MCF 10A (cell line): ENCODE measurements at regions of chr10 and their contacts with region 1.

Region 1: DNA sequence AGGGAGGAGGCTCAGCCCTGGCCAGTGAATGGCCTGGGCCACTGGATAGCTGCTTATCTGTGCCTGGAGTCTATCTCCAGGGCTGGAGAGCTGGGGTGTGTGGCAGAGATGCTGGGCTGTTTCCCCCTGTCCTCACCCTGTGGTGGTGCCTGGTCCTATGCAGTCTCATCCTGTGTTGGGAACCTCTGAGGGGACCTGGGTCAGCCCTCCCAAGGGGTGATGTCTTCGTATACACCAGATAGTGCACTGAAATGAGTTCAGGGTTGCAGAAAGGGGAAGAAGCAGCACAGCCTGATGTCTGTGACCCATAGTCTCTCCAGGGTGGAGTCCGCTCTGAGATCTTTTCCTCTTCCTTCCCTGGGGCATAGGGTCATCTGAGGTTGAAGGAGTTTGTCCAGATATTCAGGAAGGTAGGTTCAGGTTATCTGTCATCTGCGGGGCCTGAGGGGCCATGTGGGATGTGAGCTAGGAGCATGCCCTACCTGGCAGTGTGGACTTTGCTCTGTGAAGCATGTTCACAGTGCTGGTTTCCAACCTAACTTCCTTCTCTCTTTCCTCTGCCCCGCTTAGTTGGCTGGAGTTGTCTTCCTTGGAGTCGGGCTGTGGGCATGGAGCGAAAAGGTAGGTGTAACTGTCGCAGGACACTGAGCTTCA is 33.4 kb upstream of the SH2D4B start:
- DNase-seq: no peak
- H3K4me3 Mint-ChIP-seq: no peak overlapping the region
- H3K27ac Mint-ChIP-seq: peak overlapping the region; percentile 86
- H3K4me1 Mint-ChIP-seq: peaks cover 68% of the 10 kb centered on the region
- H3K27me3 Mint-ChIP-seq: no peaks in the 10 kb centered on the region
- CTCF ChIP-seq: no peak

Region 2: GRCh38 chr10:80382989-80383388 is 121.3 kb before region 1 on chr10:
- CTCF ChIA-PET with region 1: interaction called, 22 read pairs
- POLR2A ChIA-PET with region 1: interaction called, 6 read pairs
- intact Hi-C with region 1: loop called (anchors 1 kb)
- DNase-seq: peak; percentile 57
- H3K4me3 Mint-ChIP-seq: no peak overlapping the region
- H3K27ac Mint-ChIP-seq: no peak overlapping the region
- H3K4me1 Mint-ChIP-seq: peaks cover 5% of the 10 kb centered on the region
- H3K27me3 Mint-ChIP-seq: no peaks in the 10 kb centered on the region
- CTCF ChIP-seq: peak; percentile 75

Region 3: DNA sequence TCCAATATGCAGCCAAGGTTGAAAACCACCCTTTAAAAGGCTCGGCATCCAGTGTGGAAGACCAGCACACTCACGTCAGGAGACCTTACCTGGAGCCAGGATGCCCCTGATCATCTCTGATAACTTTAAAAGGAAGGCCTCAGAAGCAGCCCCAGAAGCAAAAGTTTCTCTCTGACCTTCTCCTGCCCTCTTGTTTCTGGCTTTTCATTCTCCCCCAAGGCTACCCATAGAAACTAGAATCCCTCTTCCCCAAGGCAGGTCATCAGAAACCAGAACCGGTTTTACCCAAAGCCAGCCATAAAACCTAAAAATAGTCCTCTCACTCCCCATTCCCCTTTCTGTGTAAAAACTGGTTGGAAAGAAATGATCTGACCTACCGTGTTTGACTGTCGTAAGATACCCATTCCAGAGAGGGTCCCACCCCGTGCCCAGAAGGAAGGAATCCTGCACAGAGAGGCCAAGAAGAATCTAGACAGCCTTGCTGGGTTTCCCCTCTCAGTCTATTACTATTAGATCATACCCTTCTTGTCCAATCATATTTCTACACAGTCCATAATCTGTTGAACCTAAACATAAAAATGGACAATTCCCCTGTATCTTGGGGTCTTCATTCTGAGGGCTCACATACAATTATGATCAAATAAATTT is 67.7 kb before region 1 on chr10:
- CTCF ChIA-PET with region 1: interaction called, 923 read pairs
- POLR2A ChIA-PET with region 1: interaction called, 4 read pairs
- intact Hi-C with region 1: no loop called
- DNase-seq: no peak
- H3K4me3 Mint-ChIP-seq: no peak overlapping the region
- H3K27ac Mint-ChIP-seq: no peak overlapping the region
- H3K4me1 Mint-ChIP-seq: no peaks in the 10 kb centered on the region
- H3K27me3 Mint-ChIP-seq: no peaks in the 10 kb centered on the region
- CTCF ChIP-seq: no peak

Region 4: DNA sequence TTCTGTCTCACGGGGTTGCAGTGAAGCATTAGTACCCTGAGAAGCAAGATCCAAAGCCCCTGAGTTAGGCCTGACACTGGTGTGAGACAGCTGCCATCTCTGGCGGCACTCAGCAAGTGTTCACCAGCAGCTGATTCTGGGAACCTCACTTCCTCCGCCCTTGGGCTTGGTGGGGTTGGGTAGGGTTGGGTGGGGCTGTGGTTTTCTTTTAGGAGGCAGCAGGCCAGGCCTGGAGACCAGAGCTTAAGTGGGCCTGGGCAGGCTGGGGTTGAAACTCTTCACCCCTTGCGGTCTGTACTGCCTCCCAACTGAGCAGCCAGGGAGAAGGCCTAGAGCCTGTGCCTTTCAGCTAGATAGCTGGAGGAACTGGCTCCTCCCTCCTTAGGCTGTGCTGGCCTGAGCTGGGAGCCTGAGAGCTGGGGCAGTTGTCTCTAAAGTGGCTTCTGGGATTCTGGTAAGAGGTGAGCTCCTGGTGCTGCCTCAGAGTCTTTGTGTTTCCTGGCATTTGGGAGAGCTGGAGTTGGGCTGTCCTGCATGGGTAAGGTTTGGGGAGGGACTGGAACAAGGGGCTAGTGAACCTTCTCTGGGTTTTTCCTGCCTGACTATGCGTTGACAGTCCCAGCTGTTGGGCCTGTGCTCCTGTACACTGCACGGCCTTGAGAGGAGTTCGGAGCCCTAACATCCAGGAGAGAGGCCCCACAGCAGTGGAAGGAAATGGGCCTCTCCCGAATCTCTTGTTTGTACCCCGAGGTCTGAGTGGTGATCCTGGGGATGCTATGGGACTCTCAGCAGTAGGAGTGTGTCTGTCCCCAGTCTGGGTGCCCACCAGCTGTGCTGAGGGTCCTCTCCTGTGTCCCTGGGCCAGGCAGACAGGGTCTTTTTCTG is 45.0 kb before region 1 on chr10:
- CTCF ChIA-PET with region 1: interaction called, 923 read pairs
- POLR2A ChIA-PET with region 1: interaction called, 225 read pairs
- intact Hi-C with region 1: loop called (anchors 1 kb)
- DNase-seq: peak; percentile 88
- H3K4me3 Mint-ChIP-seq: peak overlapping the region; percentile 58
- H3K27ac Mint-ChIP-seq: peak overlapping the region; percentile 89
- H3K4me1 Mint-ChIP-seq: peaks cover 65% of the 10 kb centered on the region
- H3K27me3 Mint-ChIP-seq: no peaks in the 10 kb centered on the region
- CTCF ChIP-seq: no peak

Region 5: DNA sequence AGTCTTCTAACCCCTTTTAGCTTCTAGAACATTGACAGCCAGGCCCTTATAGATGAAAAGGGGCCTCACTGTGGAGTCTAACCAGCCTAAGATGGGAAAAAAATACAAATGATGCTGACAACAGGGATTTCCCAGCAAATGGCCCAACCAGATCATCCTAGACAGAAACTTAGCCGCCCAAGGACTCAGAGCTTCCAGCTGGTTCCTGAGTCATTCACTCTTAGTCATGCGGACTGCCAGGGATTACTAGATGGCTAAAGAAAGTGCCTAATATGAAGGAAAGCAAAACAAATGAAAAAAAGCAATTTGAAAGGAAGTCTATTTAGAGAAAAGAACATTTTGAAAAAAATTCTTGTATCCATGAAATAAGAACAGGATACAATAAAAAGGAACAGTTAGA is 26.5 kb before region 1 on chr10:
- CTCF ChIA-PET with region 1: interaction called, 923 read pairs
- POLR2A ChIA-PET with region 1: interaction called, 205 read pairs
- intact Hi-C with region 1: no loop called
- DNase-seq: peak; percentile 89
- H3K4me3 Mint-ChIP-seq: no peak overlapping the region
- H3K27ac Mint-ChIP-seq: no peak overlapping the region
- H3K4me1 Mint-ChIP-seq: peaks cover 33% of the 10 kb centered on the region
- H3K27me3 Mint-ChIP-seq: no peaks in the 10 kb centered on the region
- CTCF ChIP-seq: no peak

Region 6: GRCh38 chr10:80493522-80494051 is 10.7 kb before region 1 on chr10:
- CTCF ChIA-PET with region 1: interaction called, 27 read pairs
- POLR2A ChIA-PET with region 1: interaction called, 12 read pairs
- intact Hi-C with region 1: no loop called
- DNase-seq: no peak
- H3K4me3 Mint-ChIP-seq: no peak overlapping the region
- H3K27ac Mint-ChIP-seq: peak overlapping the region; percentile 1
- H3K4me1 Mint-ChIP-seq: peaks cover 69% of the 10 kb centered on the region
- H3K27me3 Mint-ChIP-seq: no peaks in the 10 kb centered on the region
- CTCF ChIP-seq: no peak